AG04450 (cell line): ENCODE measurements at regions of chr3 and their contacts with region 1.

Region 1: GRCh38 chr3:187679638-187680396 is 9.6 kb upstream of the SST start:
- DNase-seq: peak; percentile 24
- H3K4me3 ChIP-seq: no peak overlapping the region
- H3K27ac ChIP-seq: no peak overlapping the region
- H3K27me3 ChIP-seq: peaks cover 29% of the 10 kb centered on the region
- CTCF ChIP-seq: peak; percentile 98

Region 2: DNA sequence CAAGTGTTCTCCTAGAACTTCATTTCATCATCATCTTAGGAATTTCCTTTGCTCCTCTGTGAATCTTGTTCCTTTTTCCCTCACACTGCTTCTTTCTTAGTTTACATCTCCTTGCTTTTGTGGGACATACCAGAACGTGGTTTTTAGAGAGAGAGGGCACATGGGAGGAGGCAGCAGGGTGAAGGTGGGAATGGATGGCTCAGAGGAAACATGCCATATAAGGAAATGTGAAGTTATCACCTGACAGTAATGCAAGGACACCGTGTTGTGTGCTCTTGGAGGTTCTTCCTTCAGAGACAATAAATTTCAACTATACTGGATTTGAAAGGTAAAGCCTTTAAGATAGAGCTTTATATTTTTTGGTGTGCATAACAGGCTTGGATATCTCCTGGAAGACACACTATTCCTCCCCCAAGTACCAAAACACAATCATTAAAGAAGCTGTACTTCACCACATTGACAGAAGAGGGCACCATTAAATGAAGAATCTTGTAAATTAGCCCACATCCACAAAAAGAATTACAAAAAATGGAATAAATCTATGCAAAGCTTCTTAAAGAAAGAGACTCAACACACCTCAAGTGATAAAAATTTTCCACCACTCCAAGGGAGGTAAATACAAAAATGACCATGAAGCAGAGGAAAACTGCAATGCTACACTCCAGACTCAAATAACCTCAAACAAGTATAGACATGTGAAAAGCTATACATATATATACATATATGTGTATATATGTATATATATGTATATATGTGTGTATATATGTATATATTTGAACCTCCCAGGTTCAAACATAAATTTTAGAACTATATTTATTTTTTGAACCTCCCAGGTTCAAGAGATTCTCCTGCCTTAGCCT is 566.7 kb before region 1 on chr3:
- CTCF ChIA-PET with region 1: interaction called, 49 read pairs
- POLR2A ChIA-PET with region 1: no interaction called
- DNase-seq: no peak
- H3K4me3 ChIP-seq: no peak overlapping the region
- H3K27ac ChIP-seq: no peak overlapping the region
- H3K27me3 ChIP-seq: no peaks in the 10 kb centered on the region
- CTCF ChIP-seq: peak; percentile 61

Region 3: DNA sequence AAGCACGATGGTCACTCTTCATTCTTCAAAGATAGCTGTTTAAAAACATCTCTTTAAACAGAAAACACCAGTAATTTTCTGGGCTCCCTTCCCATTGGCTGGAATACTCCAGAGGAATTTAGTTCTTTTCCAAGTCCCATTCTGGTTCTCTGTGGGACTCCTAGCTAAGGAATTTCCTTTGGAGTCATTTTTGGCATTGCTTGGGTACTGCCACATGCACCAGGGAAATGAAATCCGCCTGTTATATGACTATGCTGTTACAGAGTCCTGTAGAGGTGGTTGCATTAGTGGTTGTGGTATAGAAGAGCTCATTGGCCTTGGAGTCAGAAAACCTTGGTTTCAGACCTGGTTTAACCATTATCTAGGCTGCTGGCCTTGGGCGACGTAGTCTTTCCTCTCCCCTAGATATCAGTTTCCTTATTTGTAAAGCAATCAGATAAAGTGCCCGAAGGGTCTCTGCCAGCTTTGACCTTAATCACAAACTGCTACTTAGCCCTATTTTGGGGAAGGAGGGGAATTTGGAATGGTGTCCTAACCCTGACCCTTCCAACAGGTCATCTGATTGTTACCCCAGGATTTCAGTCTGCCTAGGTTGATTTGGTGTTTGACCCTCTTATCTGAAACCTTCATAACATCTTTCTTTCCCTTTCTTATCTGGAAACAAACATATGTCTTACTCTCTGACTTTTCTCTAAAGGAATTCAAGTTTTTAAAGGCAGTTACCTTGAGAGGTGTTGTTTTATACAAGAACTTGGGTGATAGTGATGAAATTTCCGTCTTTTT is 469.1 kb before region 1 on chr3:
- CTCF ChIA-PET with region 1: interaction called, 35 read pairs
- POLR2A ChIA-PET with region 1: no interaction called
- DNase-seq: no peak
- H3K4me3 ChIP-seq: no peak overlapping the region
- H3K27ac ChIP-seq: no peak overlapping the region
- H3K27me3 ChIP-seq: no peaks in the 10 kb centered on the region
- CTCF ChIP-seq: no peak

Region 4: DNA sequence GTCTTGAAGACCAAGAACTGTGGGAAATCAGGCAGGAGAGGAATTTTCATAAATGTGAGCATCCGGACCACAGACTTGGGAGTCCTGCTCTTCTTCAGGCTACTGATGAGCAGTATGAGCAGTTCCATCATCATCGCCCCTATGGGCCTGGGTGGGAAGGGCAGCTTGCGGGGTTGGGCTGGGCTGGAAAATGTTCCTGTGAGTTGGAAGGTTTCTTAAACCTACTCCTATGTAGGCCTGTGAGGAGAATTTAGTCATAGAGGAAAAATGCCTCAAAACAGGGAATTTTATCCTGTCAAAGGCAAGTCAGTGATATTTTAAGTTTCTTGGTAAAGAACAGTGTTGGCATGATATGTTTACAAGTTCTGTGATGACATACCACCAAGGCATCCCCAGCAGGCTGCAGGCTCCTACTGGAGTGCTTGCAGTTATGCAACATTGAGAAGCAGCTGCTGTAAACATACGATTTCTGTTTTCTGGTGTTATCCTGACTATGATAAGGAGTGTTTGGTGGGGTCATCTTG is 398.6 kb before region 1 on chr3:
- CTCF ChIA-PET with region 1: interaction called, 12 read pairs
- POLR2A ChIA-PET with region 1: no interaction called
- DNase-seq: peak; percentile 92
- H3K4me3 ChIP-seq: no peak overlapping the region
- H3K27ac ChIP-seq: peak overlapping the region; percentile 87
- H3K27me3 ChIP-seq: no peaks in the 10 kb centered on the region
- CTCF ChIP-seq: peak; percentile 52

Region 5: DNA sequence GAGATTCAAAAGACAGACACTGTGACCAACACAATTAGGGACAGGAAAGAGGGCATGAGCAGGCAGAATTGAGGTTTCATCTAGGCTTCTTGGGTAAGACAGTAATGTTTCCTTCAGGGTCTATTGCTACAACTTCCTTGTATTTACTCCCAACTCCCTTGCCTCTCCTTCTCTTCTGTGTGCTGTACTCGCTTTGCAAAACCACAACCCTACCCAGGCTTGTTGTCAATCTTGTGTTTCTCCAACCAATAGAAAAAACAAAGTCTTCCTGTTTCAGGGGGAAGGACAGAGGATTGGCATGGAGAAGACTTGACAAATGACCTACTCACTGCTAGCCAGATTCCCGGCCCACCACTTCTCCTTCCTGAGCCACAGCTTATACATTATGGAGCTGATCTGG is 352.0 kb before region 1 on chr3:
- CTCF ChIA-PET with region 1: interaction called, 696 read pairs
- POLR2A ChIA-PET with region 1: no interaction called
- DNase-seq: no peak
- H3K4me3 ChIP-seq: no peak overlapping the region
- H3K27ac ChIP-seq: no peak overlapping the region
- H3K27me3 ChIP-seq: peaks cover 10% of the 10 kb centered on the region
- CTCF ChIP-seq: no peak

Region 6: DNA sequence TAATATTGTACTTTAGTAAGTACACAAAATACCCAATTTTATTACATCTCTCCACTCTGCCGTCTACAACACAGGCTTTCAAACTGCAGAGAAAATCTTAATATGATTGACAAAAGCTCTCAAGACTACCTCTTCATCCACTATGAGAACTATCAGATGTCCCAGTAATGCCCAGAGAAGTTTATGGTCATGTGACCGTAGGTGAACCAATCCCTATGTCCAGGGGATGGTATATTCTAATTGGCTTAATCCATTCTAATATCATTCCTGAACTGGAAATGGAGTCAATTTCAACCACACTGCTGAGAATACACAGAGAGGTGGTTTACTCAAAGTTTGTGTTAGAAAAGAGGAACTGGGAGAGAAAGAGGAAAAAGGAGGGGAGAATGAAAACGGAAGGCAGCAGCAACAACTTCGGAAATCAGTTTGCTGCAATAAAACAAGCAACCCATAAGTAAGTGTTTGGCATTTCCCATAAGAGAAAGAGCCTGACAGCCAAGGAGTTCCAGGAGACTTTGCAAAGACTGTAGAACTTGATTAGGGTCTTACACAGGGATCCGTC is 16.9 kb before region 1 on chr3:
- CTCF ChIA-PET with region 1: interaction called, 50 read pairs
- POLR2A ChIA-PET with region 1: no interaction called
- DNase-seq: no peak
- H3K4me3 ChIP-seq: no peak overlapping the region
- H3K27ac ChIP-seq: no peak overlapping the region
- H3K27me3 ChIP-seq: no peaks in the 10 kb centered on the region
- CTCF ChIP-seq: no peak

Region 7: DNA sequence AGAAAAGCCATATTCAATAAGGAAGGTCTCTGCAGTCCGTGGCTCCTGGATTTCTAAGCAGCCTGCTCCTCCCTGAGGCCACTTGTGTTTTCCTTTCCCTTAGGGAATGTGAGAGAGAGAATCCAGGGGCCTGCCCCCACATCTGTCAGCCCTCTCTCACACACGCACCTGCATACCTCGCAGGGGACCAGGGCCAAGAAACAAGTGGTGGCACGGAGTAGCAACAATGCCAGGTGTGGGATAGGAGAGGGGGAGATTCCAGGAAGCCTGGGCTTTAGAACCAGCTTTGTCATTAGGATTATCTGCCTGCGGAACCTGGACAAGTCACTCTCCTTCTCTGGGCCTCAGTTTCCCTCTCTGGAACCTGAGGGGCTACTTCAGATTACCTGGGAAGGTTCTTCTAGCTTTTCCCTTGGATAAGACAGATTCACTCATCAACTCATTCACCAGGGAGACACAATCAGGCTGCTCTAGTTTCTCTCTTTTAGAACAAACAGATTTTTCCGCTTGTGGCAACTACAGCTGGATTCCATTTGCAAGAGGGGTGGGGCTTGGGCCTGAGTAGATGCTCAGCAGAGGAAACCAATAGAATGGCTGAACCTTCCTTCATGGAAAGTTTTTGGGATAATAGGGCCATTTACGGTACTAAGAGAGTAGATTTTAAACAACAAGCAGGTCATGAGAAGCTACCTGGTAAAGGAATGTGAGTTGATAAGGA is 46.0 kb after region 1 on chr3:
- CTCF ChIA-PET with region 1: no interaction called
- POLR2A ChIA-PET with region 1: no interaction called
- DNase-seq: no peak
- H3K4me3 ChIP-seq: no peak overlapping the region
- H3K27ac ChIP-seq: peak overlapping the region; percentile 25
- H3K27me3 ChIP-seq: no peaks in the 10 kb centered on the region
- CTCF ChIP-seq: no peak